Right ventricle myocardium inferior (tissue), 1 donor: ENCODE measurements at regions of chr11 and their contacts with region 1.

Region 1: GRCh38 chr11:121534131-121535093 is 81.6 kb upstream of the SORL1-AS1 start:
- DNase-seq: no peak
- ATAC-seq: peak; percentile 59

Region 2: DNA sequence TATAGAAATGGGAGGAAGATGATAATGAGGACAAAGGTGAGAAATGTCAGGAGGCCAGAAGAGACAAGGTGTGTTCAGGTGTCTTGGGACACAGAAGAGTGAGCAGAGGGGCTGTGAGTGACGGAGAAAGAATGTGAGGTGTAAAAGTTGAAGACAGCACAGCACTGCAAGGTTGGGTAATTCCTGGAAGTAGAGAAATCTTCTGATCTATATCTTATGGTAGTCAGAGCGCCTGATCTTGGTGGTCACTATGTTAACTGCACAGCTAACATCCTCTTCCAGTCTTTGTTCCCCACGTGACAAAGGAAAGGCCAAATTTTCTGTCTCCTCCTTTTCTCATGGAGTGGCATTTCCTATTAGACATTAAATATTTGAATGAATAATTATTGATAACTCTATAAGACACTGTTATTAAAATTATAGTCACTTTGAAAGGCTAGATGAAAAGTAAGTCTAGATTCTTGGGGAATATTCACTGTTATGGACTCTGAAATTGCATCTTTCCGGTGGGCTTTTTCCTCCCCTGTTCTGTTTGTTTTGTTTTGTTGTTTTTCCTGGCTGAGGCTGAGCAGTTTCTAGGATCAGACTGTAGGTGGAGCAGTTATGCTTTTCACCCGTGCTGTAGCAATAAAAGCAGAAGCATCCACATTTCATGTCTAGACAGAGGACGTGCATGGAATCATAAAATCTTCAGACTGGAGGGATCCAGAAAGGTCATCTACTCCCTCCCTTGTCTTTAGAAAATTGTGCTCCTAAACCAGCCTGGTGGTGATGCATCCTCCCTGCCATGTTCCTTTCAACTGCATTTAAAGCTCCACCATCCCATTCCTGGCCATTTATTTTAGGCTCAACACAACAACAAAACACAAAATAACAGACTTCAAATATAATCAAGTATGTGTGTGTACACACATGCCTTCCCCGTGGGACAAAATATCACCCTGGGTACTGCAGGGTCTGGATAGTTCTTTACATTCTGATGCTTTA is 215.3 kb before region 1 on chr11:
- intact Hi-C with region 1: loop called (anchors 2 kb)
- DNase-seq: no peak
- ATAC-seq: peak; percentile 71